Aorta (tissue), 5 donors: ENCODE measurements at regions of chr10 and their contacts with region 1.

Region 1: GRCh38 chr10:132464253-132465192 is 67.5 kb downstream of the PWWP2B start:
- DNase-seq: peak; percentile 92 to 94
- ATAC-seq: peak; percentile 86
- H3K4me3 ChIP-seq: no peak overlapping the region
- H3K27ac ChIP-seq: peak overlapping the region; percentile 76 to 92
- H3K4me1 ChIP-seq: no peaks in the 10 kb centered on the region
- H3K27me3 ChIP-seq: no peaks in the 10 kb centered on the region

Region 2: GRCh38 chr10:132503581-132504421 is 39.3 kb after region 1 on chr10:
- intact Hi-C with region 1: loop called (anchors 5 kb)
- DNase-seq: peak; percentile 34 to 68
- ATAC-seq: no peak
- H3K4me3 ChIP-seq: no peak overlapping the region
- H3K27ac ChIP-seq: no peak overlapping the region
- H3K4me1 ChIP-seq: no peaks in the 10 kb centered on the region
- H3K27me3 ChIP-seq: no peaks in the 10 kb centered on the region